Activated naive CD4-positive, alpha-beta T cell treated with anti-CD3 and anti-CD28 coated beads for 36 hours (primary cell): ENCODE measurements at regions of chr2 and their contacts with region 1.

Region 1: DNA sequence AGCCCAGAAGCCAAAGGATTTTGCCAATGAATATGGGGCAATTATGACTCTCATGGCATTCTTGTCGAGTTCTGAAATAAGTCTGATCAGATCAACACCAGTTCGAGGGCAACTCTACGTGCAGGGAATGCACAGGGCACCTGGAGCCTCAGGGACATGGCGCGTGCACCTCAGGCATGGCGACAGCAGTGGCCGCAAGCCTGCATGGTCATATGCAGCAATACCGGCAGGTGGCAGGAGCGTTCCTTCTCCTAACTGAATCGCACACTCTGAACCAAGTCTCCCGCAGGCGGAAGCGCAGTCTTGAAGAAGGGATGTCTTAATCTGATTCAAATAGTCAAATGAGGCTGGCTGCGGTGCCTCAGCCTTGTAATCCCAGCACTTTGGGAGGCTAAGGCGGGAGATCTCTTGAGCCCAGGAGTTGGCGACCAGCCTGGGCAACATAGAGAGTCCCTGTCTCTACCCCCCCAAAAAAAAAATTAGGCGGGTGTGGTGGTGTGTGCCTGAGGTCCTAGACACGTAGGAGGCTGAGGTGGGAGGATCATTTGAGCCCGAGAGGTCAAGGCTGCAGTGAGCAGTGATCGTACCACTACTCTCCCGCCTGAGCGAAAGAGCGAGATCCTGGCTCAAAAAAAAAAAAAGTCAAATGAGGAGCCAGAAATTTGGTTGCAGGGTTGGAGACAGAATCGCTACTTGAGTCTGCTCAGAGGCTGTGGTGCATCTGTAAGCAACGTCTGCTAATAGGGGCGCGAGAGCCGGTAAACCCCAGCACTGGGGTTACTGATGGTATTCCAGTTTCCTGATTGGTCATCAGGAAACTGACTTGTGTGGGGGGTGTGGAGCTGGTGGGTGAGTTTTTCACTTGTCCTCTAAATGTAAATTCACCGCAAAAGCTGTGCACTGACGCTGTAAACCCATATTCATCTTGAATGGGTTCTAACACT is 28.8 kb downstream of the FHL2 start:
- DNase-seq: peak; percentile 96
- H3K4me3 Mint-ChIP-seq: peak overlapping the region; percentile 10
- H3K27ac Mint-ChIP-seq: no peak overlapping the region
- H3K4me1 Mint-ChIP-seq: peaks cover 10% of the 10 kb centered on the region
- H3K27me3 Mint-ChIP-seq: peaks cover 2% of the 10 kb centered on the region

Region 2: GRCh38 chr2:105398699-105399432 is 28.8 kb after region 1 on chr2 and contains the start of gene FHL2:
- CTCF ChIA-PET with region 1: no interaction called
- intact Hi-C with region 1: loop called (anchors 1 kb)
- DNase-seq: peak; percentile 73
- H3K4me3 Mint-ChIP-seq: peak within 1 kb of the TSS; percentile 73
- H3K27ac Mint-ChIP-seq: no peak within 1 kb of the TSS
- H3K4me1 Mint-ChIP-seq: peaks cover 9% of the 10 kb centered on the region
- H3K27me3 Mint-ChIP-seq: peaks cover 13% of the 10 kb centered on the region
- total RNA-seq, gene FHL2: 1.6 to 1.8 TPM

Region 3: GRCh38 chr2:105413206-105413605 is 43.2 kb after region 1 on chr2:
- CTCF ChIA-PET with region 1: interaction called, 3 read pairs
- intact Hi-C with region 1: loop called (anchors 1 kb)
- DNase-seq: no peak
- H3K4me3 Mint-ChIP-seq: no peak overlapping the region
- H3K27ac Mint-ChIP-seq: no peak overlapping the region
- H3K4me1 Mint-ChIP-seq: peaks cover 9% of the 10 kb centered on the region
- H3K27me3 Mint-ChIP-seq: peaks cover 20% of the 10 kb centered on the region

Region 4: GRCh38 chr2:105496271-105496670 is 126.3 kb after region 1 on chr2:
- CTCF ChIA-PET with region 1: no interaction called
- intact Hi-C with region 1: no loop called
- DNase-seq: no peak
- H3K4me3 Mint-ChIP-seq: no peak overlapping the region
- H3K27ac Mint-ChIP-seq: no peak overlapping the region
- H3K4me1 Mint-ChIP-seq: no peaks in the 10 kb centered on the region
- H3K27me3 Mint-ChIP-seq: peaks cover 4% of the 10 kb centered on the region

Region 5: DNA sequence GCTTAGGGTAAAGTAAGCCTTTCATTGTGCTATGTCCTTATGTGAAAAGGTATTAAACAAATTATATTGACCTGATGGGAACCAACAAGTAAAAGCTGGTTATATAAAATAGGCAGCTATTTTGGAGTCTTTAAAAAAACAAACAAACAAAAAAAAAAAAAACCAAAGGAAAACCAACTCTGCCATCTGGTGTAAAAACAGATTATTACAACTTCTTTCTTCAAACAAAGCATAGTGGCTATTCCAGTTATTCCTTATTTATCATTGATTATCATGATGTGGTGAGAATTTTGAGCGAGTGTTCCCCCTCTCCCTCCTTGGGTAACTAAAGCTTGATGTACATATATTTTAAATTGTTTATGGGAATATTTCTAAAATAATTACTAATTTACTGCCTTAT is 151.2 kb after region 1 on chr2:
- CTCF ChIA-PET with region 1: interaction called, 46 read pairs
- intact Hi-C with region 1: loop called (anchors 1 kb)
- DNase-seq: no peak
- H3K4me3 Mint-ChIP-seq: no peak overlapping the region
- H3K27ac Mint-ChIP-seq: no peak overlapping the region
- H3K4me1 Mint-ChIP-seq: no peaks in the 10 kb centered on the region
- H3K27me3 Mint-ChIP-seq: no peaks in the 10 kb centered on the region

Region 6: DNA sequence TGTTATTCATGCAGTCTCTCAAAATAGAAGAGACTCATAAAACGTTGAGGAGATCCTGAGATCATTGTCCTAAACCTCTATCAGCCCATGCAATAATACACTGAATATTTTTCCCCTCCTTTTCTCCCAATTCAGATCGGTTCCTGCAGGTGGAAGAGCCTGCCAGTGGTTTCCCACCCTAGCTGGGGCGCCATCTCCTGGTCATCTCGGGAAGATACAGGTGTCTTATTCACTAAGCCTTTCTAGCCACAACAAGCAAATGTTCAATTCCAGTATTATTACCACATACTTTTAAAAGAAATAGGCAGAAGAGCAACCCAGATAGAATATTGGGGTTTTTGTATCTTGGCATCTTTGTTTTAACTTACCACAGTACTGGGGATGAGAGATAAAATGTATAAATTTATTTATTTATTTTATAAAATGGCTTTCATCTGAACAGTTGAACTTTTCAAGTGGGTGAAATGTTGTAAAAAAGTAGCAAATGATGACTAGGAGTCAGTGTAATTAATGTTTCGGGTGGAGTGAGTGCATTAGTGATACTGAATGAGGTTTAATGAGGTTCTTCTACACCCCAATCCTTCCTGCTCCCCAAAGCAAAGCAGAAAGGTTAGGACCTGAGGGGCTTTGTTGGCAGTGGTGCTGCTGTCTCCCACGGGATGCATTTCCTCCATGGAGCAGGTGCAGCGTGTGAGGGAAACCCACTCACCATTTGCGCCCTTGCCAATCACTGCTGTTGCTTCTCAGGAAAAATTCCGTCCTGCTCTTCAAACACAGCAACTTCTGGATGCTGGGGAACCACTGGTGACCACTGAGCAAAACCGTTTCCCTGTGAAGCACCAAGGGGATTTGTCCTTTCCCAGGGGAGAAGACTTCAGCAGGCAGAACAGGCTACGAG is 176.0 kb after region 1 on chr2:
- CTCF ChIA-PET with region 1: interaction called, 9 read pairs
- intact Hi-C with region 1: loop called (anchors 1 kb)
- DNase-seq: peak; percentile 86
- H3K4me3 Mint-ChIP-seq: peak overlapping the region; percentile 39
- H3K27ac Mint-ChIP-seq: no peak overlapping the region
- H3K4me1 Mint-ChIP-seq: peaks cover 9% of the 10 kb centered on the region
- H3K27me3 Mint-ChIP-seq: no peaks in the 10 kb centered on the region

Region 7: DNA sequence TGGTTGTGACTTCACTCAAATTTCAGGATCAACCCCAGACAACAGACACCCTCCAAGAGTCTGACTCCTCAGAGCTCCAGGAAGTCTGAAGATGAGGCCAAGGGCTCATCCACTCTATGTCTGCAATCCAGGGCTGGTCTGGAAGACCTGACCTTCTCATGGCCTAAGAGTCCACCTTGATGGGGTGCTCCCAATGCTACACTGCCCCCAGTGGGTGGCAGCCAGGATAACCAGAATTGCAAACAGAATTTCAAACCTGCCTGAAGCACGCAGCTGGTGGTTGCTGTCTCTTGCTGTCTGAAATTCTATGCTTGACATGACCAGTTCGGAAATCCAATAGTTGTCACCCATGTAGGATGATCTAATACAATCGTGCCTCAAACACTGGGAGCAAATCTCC is 728.1 kb after region 1 on chr2:
- CTCF ChIA-PET with region 1: no interaction called
- intact Hi-C with region 1: loop called (anchors 5 kb)
- DNase-seq: peak; percentile 53
- H3K4me3 Mint-ChIP-seq: no peak overlapping the region
- H3K27ac Mint-ChIP-seq: no peak overlapping the region
- H3K4me1 Mint-ChIP-seq: peaks cover 40% of the 10 kb centered on the region
- H3K27me3 Mint-ChIP-seq: no peaks in the 10 kb centered on the region